Activated naive CD4-positive, alpha-beta T cell treated with anti-CD3 and anti-CD28 coated beads, Interleukin-2, amount 10 ng/mL, durations not matched to agents 7 days and 5 days (primary cell): ENCODE measurements at regions of chr2 and their contacts with region 1.

Region 1: DNA sequence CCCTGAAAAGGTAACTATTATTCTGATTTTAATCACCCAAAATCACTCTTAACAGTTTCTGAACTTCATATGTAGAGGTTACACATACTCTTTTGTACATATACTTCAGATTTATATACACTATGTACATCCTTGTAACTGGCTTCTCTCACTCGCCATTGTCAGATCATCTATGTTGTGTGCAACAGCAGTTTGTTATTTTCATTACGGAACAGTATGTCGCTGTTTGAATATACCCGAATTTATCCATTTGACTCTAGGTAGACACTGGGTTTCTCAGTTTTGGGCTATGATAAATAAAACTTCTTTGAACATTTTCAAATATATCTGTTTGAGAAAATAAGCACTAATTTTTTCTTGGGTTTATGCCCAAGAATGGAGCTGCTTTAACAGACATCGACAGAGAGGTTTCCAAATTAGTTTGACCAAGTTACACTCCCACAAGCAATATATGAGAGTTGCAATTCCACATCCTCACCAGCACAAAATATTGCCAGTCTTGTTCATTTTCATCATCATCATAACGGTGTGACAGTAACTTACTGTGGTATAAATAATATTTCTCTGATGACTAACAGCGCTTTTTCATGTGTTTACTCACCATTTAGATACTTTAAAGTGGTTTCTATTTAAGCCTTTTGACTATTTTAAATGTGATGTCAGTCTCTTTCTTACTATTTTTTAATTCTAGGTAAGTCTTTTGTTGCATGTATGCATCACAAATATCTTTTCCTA is 80.9 kb downstream of the SMC6 start:
- DNase-seq: no peak
- H3K4me3 Mint-ChIP-seq: no peak overlapping the region
- H3K27ac Mint-ChIP-seq: no peak overlapping the region
- H3K4me1 Mint-ChIP-seq: no peaks in the 10 kb centered on the region
- H3K27me3 Mint-ChIP-seq: no peaks in the 10 kb centered on the region

Region 2: DNA sequence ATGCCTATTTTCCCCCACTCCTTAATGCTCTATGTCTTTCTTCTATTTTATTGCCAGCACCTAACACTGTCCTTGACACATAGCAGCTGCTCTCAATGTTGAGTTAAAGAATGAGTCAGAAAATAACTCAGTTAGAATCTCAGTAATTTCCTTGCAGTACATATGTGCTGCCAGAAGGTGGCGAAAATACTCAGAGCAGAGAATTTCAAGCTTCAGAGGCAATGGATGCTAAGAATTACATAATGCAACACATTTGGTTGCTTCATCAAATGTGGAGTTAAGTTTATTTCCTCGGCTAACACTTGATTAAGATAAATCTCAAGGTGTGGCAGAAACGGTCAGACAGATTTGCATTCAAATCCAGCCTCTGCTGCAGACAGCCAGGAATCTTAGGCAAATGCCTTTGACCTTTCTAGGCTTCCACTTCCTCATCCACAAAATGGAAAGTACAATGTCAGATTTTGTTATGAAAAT is 26.6 kb before region 1 on chr2:
- CTCF ChIA-PET with region 1: interaction called, 58 read pairs
- DNase-seq: peak; percentile 54
- H3K4me3 Mint-ChIP-seq: no peak overlapping the region
- H3K27ac Mint-ChIP-seq: no peak overlapping the region
- H3K4me1 Mint-ChIP-seq: no peaks in the 10 kb centered on the region
- H3K27me3 Mint-ChIP-seq: no peaks in the 10 kb centered on the region

Region 3: DNA sequence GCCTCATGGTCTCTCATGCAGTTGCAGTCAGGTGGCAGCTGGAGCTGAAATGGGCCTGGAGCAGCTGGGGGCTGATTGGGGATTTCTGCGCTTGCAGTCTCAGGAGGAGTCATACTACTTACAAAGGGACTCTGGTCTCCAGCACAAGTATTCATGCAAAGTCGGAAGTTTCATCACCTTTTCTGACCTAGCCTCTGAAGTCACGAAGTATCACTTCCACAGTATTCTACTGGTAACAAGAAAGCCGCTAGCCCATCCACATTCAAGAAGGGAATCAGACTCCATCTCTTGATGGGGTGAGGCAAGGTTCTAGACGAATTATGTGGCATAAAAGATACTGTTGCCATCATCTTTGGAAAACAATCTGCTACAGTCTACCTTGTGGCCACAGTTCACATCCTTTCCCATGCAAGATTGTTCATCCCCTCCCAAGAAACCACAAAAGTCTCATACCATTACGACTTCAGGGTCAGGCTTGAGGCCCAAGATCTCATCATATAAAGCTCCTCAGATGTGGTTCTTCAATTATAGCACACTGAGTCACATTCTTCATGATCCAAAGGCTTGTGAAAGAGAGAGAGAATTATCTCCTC is 14.4 kb before region 1 on chr2:
- CTCF ChIA-PET with region 1: interaction called, 50 read pairs
- DNase-seq: no peak
- H3K4me3 Mint-ChIP-seq: no peak overlapping the region
- H3K27ac Mint-ChIP-seq: no peak overlapping the region
- H3K4me1 Mint-ChIP-seq: peaks cover 11% of the 10 kb centered on the region
- H3K27me3 Mint-ChIP-seq: no peaks in the 10 kb centered on the region

Region 4: DNA sequence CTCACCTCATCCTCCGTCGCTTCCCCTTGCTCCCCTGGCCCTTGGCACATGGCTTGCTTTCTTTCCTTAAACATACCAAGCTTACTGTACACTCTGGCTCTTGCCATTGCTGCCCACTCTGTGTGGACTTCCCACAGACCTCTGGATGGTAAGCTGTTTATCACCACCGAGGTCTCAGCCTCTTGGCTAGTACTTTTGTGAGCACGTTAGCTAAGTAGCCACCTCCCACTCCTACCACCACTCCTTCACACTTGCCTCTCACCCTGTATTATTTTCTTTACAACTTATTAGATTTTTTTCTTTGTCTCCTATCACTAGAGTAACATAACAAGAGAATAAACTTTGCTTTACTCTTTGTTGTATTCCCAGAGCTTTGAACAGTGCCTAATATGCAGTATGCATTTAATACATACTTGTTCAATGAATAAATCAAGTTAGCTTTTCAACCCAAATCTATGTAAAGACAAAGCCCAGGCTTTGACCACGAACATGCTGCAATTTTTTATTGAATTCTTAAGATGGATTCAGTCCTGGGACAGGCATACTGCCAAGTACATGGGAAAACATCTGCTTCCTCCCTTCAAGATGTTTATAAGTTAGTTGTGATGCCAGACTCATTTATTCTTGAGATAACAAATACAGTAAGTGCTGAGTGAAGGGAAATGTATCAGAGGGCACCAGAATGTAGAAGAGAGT is 118.5 kb after region 1 on chr2:
- CTCF ChIA-PET with region 1: no interaction called
- DNase-seq: no peak
- H3K4me3 Mint-ChIP-seq: no peak overlapping the region
- H3K27ac Mint-ChIP-seq: no peak overlapping the region
- H3K4me1 Mint-ChIP-seq: peaks cover 9% of the 10 kb centered on the region
- H3K27me3 Mint-ChIP-seq: peaks cover 44% of the 10 kb centered on the region